AG04449 (cell line): ENCODE measurements at regions of chr7 and their contacts with region 1.

Region 1: GRCh38 chr7:16918288-16918895 is 36.6 kb upstream of the AGR3 start:
- DNase-seq: no peak
- H3K4me3 ChIP-seq: no peak overlapping the region
- CTCF ChIP-seq: peak; percentile 32

Region 2: DNA sequence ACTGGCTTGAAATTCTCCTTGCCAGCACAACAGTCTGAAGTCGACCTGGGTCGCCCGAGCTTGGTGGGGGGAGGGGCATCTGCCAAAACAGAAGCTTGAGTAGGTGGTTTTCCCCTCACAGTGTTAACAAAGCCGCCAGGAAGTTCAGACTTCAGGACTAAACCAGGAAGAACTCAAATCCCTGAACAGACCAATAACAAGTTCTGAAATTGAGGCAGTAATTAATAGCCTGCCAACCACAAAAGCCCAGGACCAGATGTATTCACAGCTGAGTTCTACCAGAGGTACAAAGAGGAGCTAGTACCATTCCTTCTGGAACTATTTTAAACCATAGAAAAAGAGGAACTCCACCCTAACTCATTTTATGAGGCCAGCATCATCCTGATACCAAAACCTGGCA is 346.5 kb before region 1 on chr7:
- CTCF ChIA-PET with region 1: no interaction called
- POLR2A ChIA-PET with region 1: no interaction called
- DNase-seq: no peak
- H3K4me3 ChIP-seq: no peak overlapping the region
- CTCF ChIP-seq: no peak

Region 3: GRCh38 chr7:16702440-16702839 is 216.0 kb before region 1 on chr7:
- CTCF ChIA-PET with region 1: interaction called, 92 read pairs
- POLR2A ChIA-PET with region 1: no interaction called
- DNase-seq: no peak
- H3K4me3 ChIP-seq: no peak overlapping the region
- CTCF ChIP-seq: no peak

Region 4: GRCh38 chr7:16891338-16891737 is 27.1 kb before region 1 on chr7:
- CTCF ChIA-PET with region 1: interaction called, 107 read pairs
- POLR2A ChIA-PET with region 1: no interaction called
- DNase-seq: no peak
- H3K4me3 ChIP-seq: no peak overlapping the region
- CTCF ChIP-seq: peak; percentile 46

Region 5: DNA sequence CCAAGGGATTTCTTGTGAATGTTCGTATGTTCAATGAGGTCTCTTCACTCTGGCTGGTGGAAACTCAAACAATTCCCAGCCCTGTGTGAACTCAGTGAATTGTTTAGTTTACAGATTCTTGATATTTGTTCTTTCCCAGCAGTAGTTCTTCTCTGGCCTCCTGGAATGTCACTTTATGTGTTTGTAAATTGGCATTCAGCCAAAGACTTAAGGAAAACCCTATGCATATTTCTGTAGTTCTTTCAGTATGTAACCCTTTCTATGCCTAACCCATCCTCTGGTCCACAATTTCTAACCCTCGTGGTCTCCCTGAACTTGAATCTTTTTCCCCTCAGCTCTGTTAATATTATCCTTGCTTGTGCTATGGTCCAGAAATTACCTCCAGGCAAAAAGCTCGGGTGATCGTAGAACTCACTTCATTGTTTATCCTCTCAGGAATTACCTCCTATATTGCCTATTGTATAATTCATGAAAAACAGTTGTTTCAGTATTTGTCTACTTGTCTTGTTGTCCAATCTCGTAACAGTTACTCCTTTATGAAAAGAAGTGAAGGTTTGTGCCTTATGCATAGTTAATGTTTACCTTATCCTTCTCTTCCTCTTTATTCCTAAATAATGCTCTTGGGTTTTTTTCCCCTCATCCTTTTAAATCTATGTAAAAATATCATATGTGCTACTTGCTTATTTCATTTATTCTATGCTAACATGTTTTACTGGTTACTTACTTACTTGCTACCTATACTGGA is 12.9 kb before region 1 on chr7:
- CTCF ChIA-PET with region 1: interaction called, 30 read pairs
- POLR2A ChIA-PET with region 1: no interaction called
- DNase-seq: peak; percentile 41
- H3K4me3 ChIP-seq: no peak overlapping the region
- CTCF ChIP-seq: no peak